Spleen (tissue), 13 donors: ENCODE measurements at regions of chr1 and their contacts with region 1.

Region 1: GRCh38 chr1:18913065-18913835 is 10.9 kb upstream of the ALDH4A1 start:
- DNase-seq: peak; percentile 92
- H3K4me3 ChIP-seq: no peak overlapping the region
- H3K27ac ChIP-seq: peak overlapping the region in 6 of 8 donors; percentile 45 to 76 (median 54)
- H3K4me1 ChIP-seq: peaks cover 5 to 48% (median 21%) of the 10 kb centered on the region in 6 donors
- H3K27me3 ChIP-seq: no peaks in the 10 kb centered on the region
- CTCF ChIP-seq: peak; percentile 82 to 98 (median 96)
- POLR2A ChIP-seq: no peak

Region 2: DNA sequence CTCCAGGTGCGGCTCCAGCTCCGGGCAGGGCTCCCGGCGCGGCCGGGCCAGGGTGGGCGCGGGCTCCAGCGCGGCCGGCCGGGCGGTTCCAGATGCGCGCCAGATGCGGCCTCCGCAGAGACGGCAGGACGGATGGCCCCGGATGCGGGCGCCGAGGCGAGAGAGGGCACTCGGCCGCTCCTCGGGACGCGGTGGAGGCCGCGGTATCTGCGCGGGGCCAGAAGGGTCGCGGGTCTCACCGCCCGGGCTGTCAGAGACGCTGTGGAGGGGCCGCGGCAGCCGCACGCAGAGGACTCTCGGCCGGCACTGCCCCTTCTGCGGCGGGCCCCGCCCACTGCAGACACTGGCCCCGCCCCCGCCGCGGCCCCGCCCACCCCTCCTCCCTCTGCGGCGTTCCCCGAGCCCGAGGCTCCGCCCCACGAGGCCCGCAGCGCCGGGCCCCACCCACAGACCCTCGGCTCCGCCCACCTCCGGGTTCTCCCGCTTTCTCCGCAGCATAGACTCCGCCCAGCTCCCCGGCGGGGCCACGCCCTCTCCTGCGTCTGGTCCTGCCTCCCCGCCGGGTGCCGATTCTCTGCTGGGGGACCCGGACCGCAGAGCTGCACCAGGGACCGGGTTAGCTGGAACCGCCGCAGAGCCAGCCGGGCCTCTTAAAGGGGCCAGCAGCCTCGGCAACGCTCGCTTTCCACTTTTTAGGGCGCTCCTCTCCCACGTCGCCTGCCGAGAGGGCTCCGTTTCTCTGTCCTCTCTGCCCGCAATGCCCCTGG is 43.3 kb after region 1 on chr1 and contains the start of gene IFFO2:
- intact Hi-C with region 1: loop called (anchors 5 kb)
- DNase-seq: peak; percentile 100
- H3K4me3 ChIP-seq: peak within 1 kb of the TSS; percentile 70 to 98 (median 82)
- H3K27ac ChIP-seq: peak within 1 kb of the TSS; percentile 57 to 93 (median 83)
- H3K4me1 ChIP-seq: peaks cover 43 to 58% (median 53%) of the 10 kb centered on the region in 6 donors
- H3K27me3 ChIP-seq: peaks cover 0 to 28% (median 0%) of the 10 kb centered on the region in 7 donors
- CTCF ChIP-seq: peak in 1 of 11 experiments; percentile 24
- POLR2A ChIP-seq: peak in 1 of 3 donors; percentile 85
- total RNA-seq, gene IFFO2: 13.6 to 19.7 (median 16.4) TPM

Region 3: GRCh38 chr1:18972531-18972930 is 59.3 kb after region 1 on chr1:
- intact Hi-C with region 1: loop called (anchors 5 kb)
- DNase-seq: no peak
- H3K4me3 ChIP-seq: no peak overlapping the region
- H3K27ac ChIP-seq: no peak overlapping the region
- H3K4me1 ChIP-seq: peaks cover 0 to 28% (median 16%) of the 10 kb centered on the region in 6 donors
- H3K27me3 ChIP-seq: peaks cover 0 to 4% (median 0%) of the 10 kb centered on the region in 7 donors
- CTCF ChIP-seq: peak; percentile 30 to 58 (median 47)
- POLR2A ChIP-seq: no peak